Activated naive CD4-positive, alpha-beta T cell treated with anti-CD3 and anti-CD28 coated beads for 36 hours (primary cell): ENCODE measurements at regions of chr3 and their contacts with region 1.

Region 1: DNA sequence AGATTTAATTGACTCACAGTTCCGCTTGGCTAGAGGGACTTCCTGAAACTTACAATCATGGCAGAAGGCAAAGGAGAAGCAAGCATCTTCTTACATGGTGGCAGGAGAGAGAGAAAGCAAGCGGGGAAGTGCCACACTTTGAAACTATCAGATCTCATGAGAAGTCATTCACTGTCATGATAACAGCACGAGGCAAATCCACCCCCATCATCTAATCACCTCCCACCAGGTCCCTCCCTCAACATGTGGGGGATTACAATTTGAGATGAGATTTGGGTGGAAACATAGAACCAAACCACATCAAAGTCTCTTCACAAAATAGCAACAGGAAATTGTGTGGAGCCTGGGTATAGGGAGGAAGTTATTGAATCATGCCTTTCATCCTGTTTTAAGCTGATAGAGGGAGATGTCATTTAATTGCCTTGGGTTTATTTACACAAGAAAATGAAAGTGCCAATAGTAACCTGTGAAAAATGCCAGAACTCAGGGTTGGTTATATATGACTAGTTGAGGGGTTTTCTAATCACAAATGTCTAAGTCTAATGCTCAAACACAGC is 624.8 kb upstream of the LMCD1 start:
- DNase-seq: peak; percentile 41
- H3K4me3 Mint-ChIP-seq: no peak overlapping the region
- H3K27ac Mint-ChIP-seq: peak overlapping the region; percentile 5
- H3K4me1 Mint-ChIP-seq: peaks cover 32% of the 10 kb centered on the region
- H3K27me3 Mint-ChIP-seq: no peaks in the 10 kb centered on the region

Region 2: GRCh38 chr3:7205962-7206361 is 670.9 kb before region 1 on chr3:
- CTCF ChIA-PET with region 1: no interaction called
- intact Hi-C with region 1: loop called (anchors 5 kb)
- DNase-seq: no peak
- H3K4me3 Mint-ChIP-seq: no peak overlapping the region
- H3K27ac Mint-ChIP-seq: no peak overlapping the region
- H3K4me1 Mint-ChIP-seq: peaks cover 12% of the 10 kb centered on the region
- H3K27me3 Mint-ChIP-seq: no peaks in the 10 kb centered on the region

Region 3: GRCh38 chr3:7520059-7520458 is 356.8 kb before region 1 on chr3:
- CTCF ChIA-PET with region 1: no interaction called
- intact Hi-C with region 1: no loop called
- DNase-seq: no peak
- H3K4me3 Mint-ChIP-seq: no peak overlapping the region
- H3K27ac Mint-ChIP-seq: no peak overlapping the region
- H3K4me1 Mint-ChIP-seq: no peaks in the 10 kb centered on the region
- H3K27me3 Mint-ChIP-seq: peaks cover 4% of the 10 kb centered on the region

Region 4: DNA sequence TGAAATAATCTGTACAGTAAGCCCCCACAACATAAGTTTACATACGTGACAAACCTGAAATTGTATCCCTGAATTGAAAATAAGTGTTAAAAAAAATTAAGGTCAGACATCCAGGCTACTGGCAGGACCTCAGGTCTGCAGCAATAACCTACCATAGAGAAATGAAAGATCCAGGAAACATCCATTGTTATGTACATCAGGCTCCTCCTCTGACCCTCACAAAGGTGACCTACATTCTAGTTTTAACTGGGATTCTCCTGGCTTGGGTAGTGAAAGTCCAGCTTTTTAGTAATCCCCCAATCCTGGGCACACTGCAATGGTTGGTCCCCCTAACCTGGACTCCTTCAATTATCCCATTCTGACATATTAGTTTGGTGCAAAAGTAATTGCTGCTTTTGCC is 124.8 kb before region 1 on chr3:
- CTCF ChIA-PET with region 1: no interaction called
- intact Hi-C with region 1: loop called (anchors 2 kb)
- DNase-seq: no peak
- H3K4me3 Mint-ChIP-seq: no peak overlapping the region
- H3K27ac Mint-ChIP-seq: no peak overlapping the region
- H3K4me1 Mint-ChIP-seq: peaks cover 7% of the 10 kb centered on the region
- H3K27me3 Mint-ChIP-seq: no peaks in the 10 kb centered on the region

Region 5: DNA sequence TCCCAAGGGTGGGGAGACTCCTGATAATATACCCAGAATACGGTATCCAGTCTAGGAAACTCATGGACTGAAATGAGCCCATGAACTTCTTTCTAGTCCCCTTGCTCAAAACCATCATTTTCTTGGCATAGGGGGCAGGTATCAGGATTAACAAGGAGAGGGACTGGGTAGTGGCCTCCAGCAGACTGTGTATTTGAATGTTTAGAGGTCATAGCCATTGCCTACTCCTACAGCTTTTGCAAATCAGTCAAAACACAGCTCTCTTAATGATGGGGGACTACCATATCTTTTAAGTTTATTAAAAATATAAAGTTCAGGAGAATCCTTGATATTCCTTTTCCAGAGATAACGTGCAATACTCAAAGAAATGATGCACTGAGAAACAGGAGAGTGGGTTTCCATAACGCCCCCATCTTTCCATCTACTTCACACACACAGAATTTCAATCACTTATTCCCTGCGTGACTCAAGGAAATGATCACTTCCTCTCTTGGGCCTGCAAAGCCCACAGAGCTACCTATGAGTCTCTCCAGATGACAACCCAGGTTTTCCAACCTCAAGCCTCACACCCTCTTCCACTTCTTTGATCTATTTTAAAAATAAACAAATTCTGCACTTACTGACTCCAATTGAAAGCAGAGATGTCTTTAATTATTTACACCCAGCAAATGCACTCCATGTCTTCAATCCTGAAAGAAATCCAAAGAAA is 40.8 kb after region 1 on chr3:
- CTCF ChIA-PET with region 1: no interaction called
- intact Hi-C with region 1: loop called (anchors 5 kb)
- DNase-seq: peak; percentile 34
- H3K4me3 Mint-ChIP-seq: no peak overlapping the region
- H3K27ac Mint-ChIP-seq: no peak overlapping the region
- H3K4me1 Mint-ChIP-seq: peaks cover 10% of the 10 kb centered on the region
- H3K27me3 Mint-ChIP-seq: no peaks in the 10 kb centered on the region

Region 6: DNA sequence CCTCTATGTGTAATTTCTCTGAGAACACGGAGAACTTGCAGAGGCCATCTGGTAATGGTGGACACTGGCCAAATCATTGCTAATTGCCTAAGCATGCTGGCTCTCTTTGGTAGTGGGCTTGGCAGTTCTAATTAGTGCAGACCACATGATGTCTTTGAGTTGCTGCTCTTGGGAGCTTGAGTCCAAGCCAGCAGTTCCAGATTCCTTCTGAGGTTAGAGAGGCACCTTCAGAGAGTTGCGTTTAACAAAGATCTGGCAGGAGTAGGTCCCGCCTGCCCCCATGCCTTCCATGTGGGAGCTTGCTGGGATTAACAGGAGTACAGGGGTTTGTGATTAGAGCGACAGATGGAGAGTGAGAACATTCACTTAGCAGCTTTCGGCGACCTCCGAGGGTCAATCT is 175.8 kb after region 1 on chr3:
- CTCF ChIA-PET with region 1: no interaction called
- intact Hi-C with region 1: no loop called
- DNase-seq: no peak
- H3K4me3 Mint-ChIP-seq: no peak overlapping the region
- H3K27ac Mint-ChIP-seq: no peak overlapping the region
- H3K4me1 Mint-ChIP-seq: no peaks in the 10 kb centered on the region
- H3K27me3 Mint-ChIP-seq: no peaks in the 10 kb centered on the region